ENCODE measurements at regions of chr2 and their contacts with region 1.

Region 1: DNA sequence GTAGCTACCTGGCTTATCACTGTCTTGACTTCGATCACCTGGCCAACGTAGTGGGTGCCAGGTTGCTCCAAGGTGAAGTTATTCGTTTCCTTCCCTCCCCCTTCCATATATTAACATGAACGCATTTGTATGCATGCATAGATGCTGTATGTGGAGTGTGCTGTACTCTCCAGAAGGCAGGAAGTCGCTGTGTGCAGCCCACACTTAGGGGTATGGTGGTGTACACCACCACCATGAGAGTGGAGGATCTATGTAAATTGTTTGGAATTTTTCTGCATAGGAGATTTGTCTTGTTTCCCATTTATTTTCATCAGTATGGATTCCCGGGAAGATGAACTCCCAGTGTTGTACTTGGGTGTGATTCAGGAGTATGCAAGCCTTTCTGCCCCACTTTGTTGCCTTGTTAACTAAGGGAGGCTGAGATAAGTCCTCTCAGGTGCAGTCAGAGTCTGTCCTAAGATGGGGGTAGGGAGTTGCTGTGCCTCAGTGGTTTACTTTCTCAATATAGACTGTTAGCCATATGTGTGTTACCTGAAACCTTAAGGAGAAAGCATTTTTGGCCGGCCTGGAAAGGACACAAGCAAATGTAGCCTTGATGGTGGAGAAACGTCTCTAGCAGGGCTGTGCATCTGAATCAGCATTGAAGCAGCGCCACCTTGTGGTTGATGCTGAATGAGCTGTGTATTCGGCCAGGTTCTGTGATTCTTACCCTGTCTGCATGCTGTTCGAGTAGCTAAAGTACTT is 149.8 kb downstream of the TANC1 start:
- H3K4me3 Mint-ChIP-seq: no peak overlapping the region
- H3K27ac Mint-ChIP-seq: no peak overlapping the region
- H3K4me1 Mint-ChIP-seq: no peaks in the 10 kb centered on the region
- H3K27me3 Mint-ChIP-seq: no peaks in the 10 kb centered on the region

Region 2: GRCh38 chr2:158903711-158904443 is 214.4 kb before region 1 on chr2:
- intact Hi-C with region 1: loop called (anchors 1 kb)
- H3K4me3 Mint-ChIP-seq: no peak overlapping the region
- H3K27ac Mint-ChIP-seq: no peak overlapping the region
- H3K4me1 Mint-ChIP-seq: no peaks in the 10 kb centered on the region
- H3K27me3 Mint-ChIP-seq: no peaks in the 10 kb centered on the region

Measured in dendritic cell treated with granulocyte-macrophage colony-stimulating factor and Interleukin-4, amounts not matched to agents 40 ng/mL and 50 ng/mL, for 4 days (primary cell).